Activated T-helper 1 cell treated with anti-CD3 and anti-CD28 coated beads, Interleukin-12 subunit alpha, Interleukin-12 subunit beta, Interleukin-2, Interleukin-4 antibody, amounts not matched to agents 30 ng/mL and 10 ng/mL and 1 ng/mL, durations not matched to agents 14 hours and 24 hours and 36 hours (primary cell): ENCODE measurements at regions of chr17 and their contacts with region 1.

Region 1: DNA sequence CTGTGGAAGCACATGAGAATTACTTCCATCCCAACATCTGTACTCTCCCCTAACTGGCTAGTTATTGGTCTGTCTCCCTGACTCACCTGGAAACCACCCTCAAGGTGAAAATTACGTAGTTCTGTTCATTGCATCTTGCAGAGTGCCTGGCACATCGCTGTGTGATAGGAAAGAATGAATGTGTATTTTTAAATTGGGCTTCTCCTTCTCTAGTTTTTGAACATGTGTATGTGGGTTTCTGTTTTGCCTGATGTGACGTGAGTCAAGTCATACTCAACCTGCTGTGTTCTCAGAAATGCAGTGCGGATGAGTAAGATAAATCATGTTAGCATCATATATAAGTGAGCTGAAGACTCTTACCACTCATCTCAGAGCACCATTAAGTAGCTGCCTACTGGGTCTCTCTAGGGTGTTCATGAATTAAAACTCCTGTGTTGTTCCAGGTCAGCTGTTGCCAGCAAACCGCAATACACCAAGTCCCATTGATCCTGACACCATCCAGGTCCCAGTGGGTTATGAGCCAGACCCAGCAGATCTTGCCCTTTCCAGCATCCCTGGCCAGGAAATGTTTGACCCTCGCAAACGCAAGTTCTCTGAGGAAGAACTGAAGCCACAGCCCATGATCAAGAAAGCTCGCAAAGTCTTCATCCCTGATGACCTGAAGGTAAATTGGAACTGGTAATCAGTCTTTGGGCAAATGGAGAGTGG is 50.2 kb downstream of the HLF start:
- DNase-seq: peak; percentile 27
- H3K4me3 Mint-ChIP-seq: no peak overlapping the region
- H3K27ac Mint-ChIP-seq: peak overlapping the region; percentile 85
- H3K4me1 Mint-ChIP-seq: peaks cover 25% of the 10 kb centered on the region
- H3K27me3 Mint-ChIP-seq: peaks cover 5% of the 10 kb centered on the region

Region 2: DNA sequence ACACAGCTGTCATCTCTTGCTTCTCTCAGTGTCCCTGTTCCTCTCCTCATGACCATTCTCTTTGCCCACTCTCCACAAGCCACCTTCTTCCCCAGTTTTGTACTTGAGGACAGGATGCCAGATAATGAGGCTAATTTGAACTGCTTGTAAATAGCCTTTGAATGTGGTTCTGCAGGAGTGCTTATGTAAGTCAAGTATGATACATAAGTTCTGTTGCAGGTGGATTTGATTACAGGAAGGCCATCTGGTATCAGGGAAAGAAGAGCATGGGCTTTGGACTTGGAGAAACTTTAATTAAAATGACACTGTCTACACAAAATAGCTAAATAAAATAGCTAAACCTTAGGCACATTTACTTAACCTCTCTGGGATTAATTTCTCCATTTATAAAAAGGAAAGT is 170.4 kb before region 1 on chr17:
- intact Hi-C with region 1: no loop called
- DNase-seq: no peak
- H3K4me3 Mint-ChIP-seq: no peak overlapping the region
- H3K27ac Mint-ChIP-seq: no peak overlapping the region
- H3K4me1 Mint-ChIP-seq: no peaks in the 10 kb centered on the region
- H3K27me3 Mint-ChIP-seq: no peaks in the 10 kb centered on the region

Region 3: DNA sequence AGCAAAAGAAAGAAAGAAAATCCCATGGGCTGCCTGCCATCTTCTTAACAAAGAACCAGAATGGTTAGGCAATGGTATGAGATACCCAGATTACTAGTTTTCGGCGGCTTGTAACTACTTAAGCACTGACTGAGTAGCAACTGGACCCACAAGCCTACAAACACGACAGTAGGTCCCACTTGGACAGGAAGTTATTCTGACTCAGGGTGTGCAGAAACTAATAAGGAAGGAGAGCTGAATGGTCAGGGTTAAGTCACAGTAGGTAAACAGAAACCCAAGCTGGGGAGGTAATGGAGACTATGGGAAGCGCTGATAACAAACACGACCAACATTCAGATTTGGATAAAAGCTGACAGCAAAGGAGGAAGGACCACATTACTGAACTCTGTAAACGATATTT is 60.6 kb before region 1 on chr17:
- intact Hi-C with region 1: no loop called
- DNase-seq: no peak
- H3K4me3 Mint-ChIP-seq: no peak overlapping the region
- H3K27ac Mint-ChIP-seq: no peak overlapping the region
- H3K4me1 Mint-ChIP-seq: no peaks in the 10 kb centered on the region
- H3K27me3 Mint-ChIP-seq: peaks cover 21% of the 10 kb centered on the region

Region 4: DNA sequence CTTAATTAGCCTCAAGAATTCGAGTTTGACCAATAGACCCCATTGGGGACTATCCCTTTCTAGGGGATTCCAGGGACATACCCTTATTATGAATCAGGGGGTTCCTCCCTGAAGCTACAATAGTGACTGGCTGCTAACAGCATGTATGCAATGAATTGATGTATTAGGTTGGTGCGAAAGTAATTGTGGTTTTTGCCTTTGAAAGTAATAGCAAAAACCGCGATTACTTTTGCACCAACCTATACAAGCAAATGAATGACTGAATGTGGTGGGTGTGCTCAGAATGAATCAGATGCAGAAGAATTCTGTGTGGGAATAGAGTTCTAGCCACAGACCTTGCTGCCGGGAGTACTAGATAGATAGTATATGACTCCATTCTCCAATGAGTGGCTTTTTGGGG is 26.5 kb after region 1 on chr17:
- intact Hi-C with region 1: loop called (anchors 1 kb)
- DNase-seq: no peak
- H3K4me3 Mint-ChIP-seq: no peak overlapping the region
- H3K27ac Mint-ChIP-seq: no peak overlapping the region
- H3K4me1 Mint-ChIP-seq: peaks cover 46% of the 10 kb centered on the region
- H3K27me3 Mint-ChIP-seq: peaks cover 28% of the 10 kb centered on the region